ENCODE measurements at regions of chr15 and their contacts with region 1.

Region 1: GRCh38 chr15:58070801-58071418 is 5.4 kb upstream of the ALDH1A2 start:
- DNase-seq: peak; percentile 22
- H3K4me3 Mint-ChIP-seq: no peak overlapping the region
- H3K27ac Mint-ChIP-seq: no peak overlapping the region
- H3K4me1 Mint-ChIP-seq: no peaks in the 10 kb centered on the region
- H3K27me3 Mint-ChIP-seq: peaks cover 48% of the 10 kb centered on the region

Region 2: DNA sequence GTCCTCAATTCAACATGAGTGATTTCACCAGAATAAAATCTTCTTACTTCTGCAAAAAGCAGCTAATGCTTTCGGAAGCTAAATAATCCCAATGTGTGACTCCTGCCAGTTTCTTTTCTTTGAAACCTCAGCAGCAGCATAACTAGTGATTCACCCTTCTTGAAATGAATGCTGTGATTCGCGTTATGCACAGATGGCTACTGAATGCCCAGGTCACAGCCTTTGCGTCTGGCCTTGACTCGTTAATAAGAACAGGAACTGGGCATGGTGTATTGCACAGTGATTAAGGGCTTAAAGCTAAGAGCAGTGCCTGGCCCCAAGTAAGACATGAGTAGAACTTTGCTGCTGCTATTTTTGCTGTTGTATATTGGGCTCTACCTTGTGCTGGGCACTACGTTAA is 675.6 kb before region 1 on chr15:
- intact Hi-C with region 1: no loop called
- DNase-seq: no peak
- H3K4me3 Mint-ChIP-seq: no peak overlapping the region
- H3K27ac Mint-ChIP-seq: no peak overlapping the region
- H3K4me1 Mint-ChIP-seq: no peaks in the 10 kb centered on the region
- H3K27me3 Mint-ChIP-seq: peaks cover 5% of the 10 kb centered on the region

Region 3: GRCh38 chr15:57732526-57733331 is 338.2 kb before region 1 on chr15:
- intact Hi-C with region 1: loop called (anchors 5 kb)
- DNase-seq: peak; percentile 26
- H3K4me3 Mint-ChIP-seq: no peak overlapping the region
- H3K27ac Mint-ChIP-seq: no peak overlapping the region
- H3K4me1 Mint-ChIP-seq: peaks cover 10% of the 10 kb centered on the region
- H3K27me3 Mint-ChIP-seq: peaks cover 8% of the 10 kb centered on the region

Region 4: DNA sequence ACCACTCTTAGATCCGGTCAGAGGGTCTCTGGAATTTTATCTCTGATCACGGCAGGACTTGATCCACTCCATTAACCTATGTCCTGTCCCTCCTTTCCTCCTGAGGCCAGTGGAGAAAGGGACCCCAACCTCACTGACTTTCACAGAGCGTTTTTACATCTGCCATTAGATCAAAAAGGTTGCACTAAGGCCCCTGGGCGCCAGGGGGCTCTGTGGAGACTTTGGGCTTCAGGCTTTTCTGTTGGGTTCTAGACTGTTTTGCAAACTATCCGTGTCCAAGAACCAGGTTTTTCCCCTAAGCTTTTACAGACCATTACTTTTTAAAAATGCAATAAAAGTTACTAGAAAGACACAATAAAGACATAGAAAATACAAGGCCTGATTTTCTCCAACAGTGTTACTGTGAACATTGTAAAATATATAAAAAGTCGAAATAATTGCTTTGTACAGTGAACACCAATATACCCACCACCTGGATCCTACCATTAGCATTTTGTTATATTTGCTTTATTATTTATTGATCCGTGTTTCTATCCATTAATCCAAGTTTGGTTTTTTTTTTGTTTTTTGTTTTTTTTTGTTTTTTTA is 204.7 kb before region 1 on chr15:
- intact Hi-C with region 1: loop called (anchors 1 kb)
- DNase-seq: peak; percentile 34
- H3K4me3 Mint-ChIP-seq: no peak overlapping the region
- H3K27ac Mint-ChIP-seq: no peak overlapping the region
- H3K4me1 Mint-ChIP-seq: peaks cover 24% of the 10 kb centered on the region
- H3K27me3 Mint-ChIP-seq: peaks cover 38% of the 10 kb centered on the region

Region 5: DNA sequence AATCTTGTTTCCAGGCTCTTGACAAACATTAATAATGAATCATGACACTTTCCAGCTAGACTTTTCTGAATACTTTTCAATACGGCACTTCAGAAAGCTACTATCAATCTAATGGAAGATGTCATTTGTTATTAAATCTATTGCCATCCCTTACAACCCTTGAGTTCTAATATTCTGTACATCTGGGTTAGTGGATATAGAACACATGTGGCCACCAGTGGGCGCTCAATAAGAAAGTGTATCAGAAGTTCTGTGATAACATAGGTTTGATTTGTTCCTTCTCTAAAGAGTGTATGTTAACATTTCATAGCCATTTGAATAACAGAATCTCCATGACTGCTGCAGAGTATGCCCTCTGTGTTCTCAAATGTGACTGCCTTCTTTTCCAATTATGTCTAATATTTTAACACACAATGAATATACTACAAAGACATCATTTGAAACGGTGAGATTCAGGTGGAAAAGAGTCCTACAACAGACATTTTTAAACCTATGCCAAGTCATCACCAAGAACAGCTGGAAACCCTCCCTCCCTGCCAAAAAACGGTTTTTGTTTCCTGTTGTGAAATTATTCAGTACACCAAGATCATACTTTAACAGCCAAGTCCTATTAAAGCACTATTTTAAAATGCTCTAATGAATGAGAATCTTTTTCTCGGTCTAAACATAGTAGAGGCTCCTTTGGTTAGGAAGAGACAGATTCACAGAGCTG is 27.6 kb before region 1 on chr15:
- intact Hi-C with region 1: loop called (anchors 2 kb)
- DNase-seq: no peak
- H3K4me3 Mint-ChIP-seq: no peak overlapping the region
- H3K27ac Mint-ChIP-seq: no peak overlapping the region
- H3K4me1 Mint-ChIP-seq: no peaks in the 10 kb centered on the region
- H3K27me3 Mint-ChIP-seq: peaks cover 24% of the 10 kb centered on the region

Region 6: DNA sequence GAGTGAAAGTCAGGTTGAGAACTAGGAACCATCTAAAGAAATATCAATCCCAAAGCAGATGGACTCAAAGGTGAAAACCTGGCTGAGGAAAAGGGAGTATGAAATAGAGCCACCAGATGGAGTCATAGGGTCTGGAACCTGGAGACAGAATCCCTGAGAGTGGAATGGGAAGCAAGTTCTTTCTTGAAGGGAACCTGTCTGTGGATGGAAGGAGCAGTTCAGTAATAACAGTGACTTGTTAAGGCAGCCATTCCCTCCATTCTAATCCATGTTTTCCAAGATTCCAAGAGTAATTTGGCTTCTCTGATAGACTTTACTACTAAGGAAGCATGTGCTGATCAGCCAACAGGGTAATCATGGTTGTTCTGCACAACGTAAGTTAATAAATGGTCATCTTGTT is 44.8 kb after region 1 on chr15:
- intact Hi-C with region 1: no loop called
- DNase-seq: no peak
- H3K4me3 Mint-ChIP-seq: no peak overlapping the region
- H3K27ac Mint-ChIP-seq: no peak overlapping the region
- H3K4me1 Mint-ChIP-seq: no peaks in the 10 kb centered on the region
- H3K27me3 Mint-ChIP-seq: peaks cover 15% of the 10 kb centered on the region

Region 7: GRCh38 chr15:58182460-58183163 is 111.7 kb after region 1 on chr15:
- intact Hi-C with region 1: loop called (anchors 5 kb)
- DNase-seq: no peak
- H3K4me3 Mint-ChIP-seq: no peak overlapping the region
- H3K27ac Mint-ChIP-seq: no peak overlapping the region
- H3K4me1 Mint-ChIP-seq: peaks cover 11% of the 10 kb centered on the region
- H3K27me3 Mint-ChIP-seq: peaks cover 24% of the 10 kb centered on the region

Region 8: DNA sequence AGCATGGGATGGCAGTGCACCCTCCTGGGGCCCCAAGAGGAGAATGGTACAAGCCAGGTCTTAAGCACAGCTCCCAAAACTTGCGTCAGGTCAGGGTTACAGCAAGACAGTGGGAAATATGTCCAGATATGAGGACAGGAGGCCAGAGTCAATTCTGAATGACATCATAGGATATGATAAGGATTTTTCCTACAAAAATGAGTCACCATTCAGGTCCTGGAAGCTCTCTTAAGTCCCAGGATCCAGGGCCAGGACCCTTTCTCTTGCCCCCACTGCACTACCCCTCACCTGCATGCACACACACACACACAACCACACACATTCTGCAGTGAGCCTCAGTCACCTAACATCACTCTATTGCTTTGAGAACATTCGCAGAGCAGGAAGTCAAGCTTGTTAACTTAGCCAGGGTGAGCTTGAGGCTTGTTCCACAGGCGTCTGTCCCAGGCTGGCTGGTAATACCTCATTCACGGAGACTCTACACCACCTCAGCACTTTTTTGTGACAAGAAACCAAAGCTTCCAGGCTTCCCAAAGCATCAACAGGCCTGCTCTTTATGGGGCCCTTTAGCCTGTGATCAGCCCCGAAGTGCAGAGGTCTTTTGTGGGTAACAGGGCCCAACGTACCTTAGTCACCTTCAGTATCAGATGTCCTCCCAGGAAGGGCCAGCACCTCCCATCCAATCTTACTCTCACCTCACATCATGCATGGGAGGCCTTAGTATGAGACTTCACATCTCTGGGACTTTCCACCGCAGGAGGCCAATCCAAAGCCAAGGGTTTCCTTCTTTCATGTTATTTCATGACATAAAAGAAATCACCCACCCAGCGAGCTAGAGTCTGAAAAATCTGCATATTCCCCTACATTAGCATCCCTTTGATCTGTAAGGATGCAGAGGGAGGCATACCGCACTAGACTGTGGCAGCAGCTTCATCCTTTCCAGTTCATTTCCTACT is 286.9 kb after region 1 on chr15:
- intact Hi-C with region 1: no loop called
- DNase-seq: peak; percentile 35
- H3K4me3 Mint-ChIP-seq: peak overlapping the region; percentile 17
- H3K27ac Mint-ChIP-seq: peak overlapping the region; percentile 85
- H3K4me1 Mint-ChIP-seq: peaks cover 40% of the 10 kb centered on the region
- H3K27me3 Mint-ChIP-seq: peaks cover 2% of the 10 kb centered on the region